H1 (cell line): ENCODE measurements at regions of chr6 and their contacts with region 1.

Region 1: DNA sequence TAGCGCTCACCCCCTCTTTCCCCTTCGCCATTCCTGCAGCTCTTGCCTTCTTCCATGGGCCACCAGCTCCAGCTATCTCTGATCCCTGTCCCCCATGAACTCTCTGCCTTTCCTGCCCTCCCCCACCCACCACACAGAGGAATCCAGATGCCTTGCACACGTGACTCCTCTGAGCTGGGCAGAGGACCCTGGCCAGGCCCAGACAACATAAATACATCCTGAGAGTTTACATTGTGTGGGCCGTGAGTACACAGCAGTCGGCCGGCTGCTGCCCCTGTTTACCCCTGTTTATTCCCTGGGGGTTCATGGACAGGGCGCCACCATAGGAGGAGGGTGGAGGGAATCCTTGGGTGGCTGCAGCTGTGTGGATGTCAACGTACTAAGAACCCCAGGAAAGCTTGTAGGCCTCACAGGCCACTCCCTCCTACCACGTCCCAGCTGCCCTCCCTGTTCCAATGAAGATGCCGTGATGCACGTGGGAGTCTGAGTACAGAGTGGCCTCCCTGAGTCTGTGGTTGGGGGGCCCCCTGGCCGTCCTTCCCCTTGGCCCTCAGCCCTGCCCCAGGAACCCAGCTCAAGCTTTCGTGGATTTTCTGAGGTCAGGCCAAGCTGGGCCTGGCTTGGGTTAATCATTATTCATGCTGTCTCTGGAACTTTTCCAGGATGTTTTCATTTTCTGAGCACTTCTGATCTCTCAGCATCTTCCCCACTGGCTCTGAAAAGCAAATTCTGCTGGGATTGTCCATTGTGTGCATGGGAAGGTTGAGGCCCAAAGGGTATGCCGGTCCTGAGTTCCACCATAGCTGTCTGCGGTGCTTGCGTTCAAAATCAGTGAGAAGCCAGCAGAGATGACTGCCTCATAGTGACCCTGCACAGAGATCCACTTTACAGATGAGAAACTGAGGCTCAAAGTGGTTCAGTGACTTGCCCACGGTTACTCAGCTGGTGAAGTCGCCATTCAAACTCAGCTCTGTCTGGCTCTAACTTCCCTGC is 136.3 kb downstream of the MRPL14 start:
- DNase-seq: no peak
- H3K4me3 ChIP-seq: no peak overlapping the region
- H3K27ac ChIP-seq: no peak overlapping the region
- H3K4me1 ChIP-seq: peaks cover 0 to 16% (median 8%) of the 10 kb centered on the region in 4 experiments; a peak in 6 of 7 replicates
- H3K27me3 ChIP-seq: no peaks in the 10 kb centered on the region
- CTCF ChIP-seq: no peak
- EP300 ChIP-seq: no peak
- POLR2A ChIP-seq: no peak
- RAD21 ChIP-seq: no peak

Region 2: GRCh38 chr6:43758617-43759050 is 232.3 kb before region 1 on chr6:
- CTCF ChIA-PET with region 1: no interaction called
- POLR2A ChIA-PET with region 1: no interaction called
- DNase-seq: peak in 1 of 2 experiments; percentile 91
- H3K4me3 ChIP-seq: no peak overlapping the region
- H3K27ac ChIP-seq: no peak overlapping the region
- H3K4me1 ChIP-seq: peaks cover 0 to 9% (median 5%) of the 10 kb centered on the region in 4 experiments; a peak in 5 of 7 replicates
- H3K27me3 ChIP-seq: no peaks in the 10 kb centered on the region
- CTCF ChIP-seq: peak; percentile 87 to 95 (median 94)
- EP300 ChIP-seq: no peak
- POLR2A ChIP-seq: no peak
- RAD21 ChIP-seq: peak; percentile 81 to 88

Region 3: DNA sequence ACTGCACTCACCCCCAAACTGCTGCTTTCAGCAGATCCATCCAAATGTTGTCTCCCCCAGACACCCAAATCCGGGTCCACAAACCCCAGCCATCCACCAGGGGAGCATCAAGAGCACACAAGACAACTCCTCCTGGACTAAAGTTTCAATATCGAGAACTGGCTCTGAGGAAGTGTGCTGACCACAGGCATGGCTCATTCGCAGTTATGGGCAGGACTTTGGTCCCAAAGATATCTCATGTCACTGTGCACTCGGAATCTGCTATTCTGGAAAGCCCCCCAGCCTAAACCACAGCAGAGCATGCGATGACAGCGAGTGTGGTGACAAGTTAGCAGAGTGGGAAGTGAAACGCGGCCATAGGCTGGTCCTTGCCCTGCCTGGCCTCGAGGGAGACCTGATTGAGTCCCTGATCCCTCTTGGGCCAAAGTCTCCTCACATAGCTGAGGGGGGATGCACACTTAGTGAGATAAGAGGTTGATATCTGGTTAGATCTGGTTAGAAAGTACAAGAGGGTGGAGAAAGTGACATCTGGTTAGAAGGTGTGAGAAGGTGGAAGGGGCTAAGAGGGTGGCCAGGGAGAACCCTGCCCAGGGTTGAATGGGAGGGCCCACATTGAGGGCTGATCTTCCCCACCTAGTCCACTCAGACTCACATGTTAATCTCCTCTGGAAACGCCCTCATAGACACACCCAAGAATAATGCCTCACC is 13.4 kb before region 1 on chr6:
- CTCF ChIA-PET with region 1: interaction called, 35 read pairs
- POLR2A ChIA-PET with region 1: interaction called, 3 read pairs
- DNase-seq: peak in 1 of 2 experiments; percentile 19
- H3K4me3 ChIP-seq: no peak overlapping the region
- H3K27ac ChIP-seq: no peak overlapping the region
- H3K4me1 ChIP-seq: no peaks in the 10 kb centered on the region
- H3K27me3 ChIP-seq: no peaks in the 10 kb centered on the region
- CTCF ChIP-seq: no peak
- EP300 ChIP-seq: no peak
- POLR2A ChIP-seq: no peak
- RAD21 ChIP-seq: no peak